ENCODE measurements at regions of chr5 and their contacts with region 1.

Region 1: DNA sequence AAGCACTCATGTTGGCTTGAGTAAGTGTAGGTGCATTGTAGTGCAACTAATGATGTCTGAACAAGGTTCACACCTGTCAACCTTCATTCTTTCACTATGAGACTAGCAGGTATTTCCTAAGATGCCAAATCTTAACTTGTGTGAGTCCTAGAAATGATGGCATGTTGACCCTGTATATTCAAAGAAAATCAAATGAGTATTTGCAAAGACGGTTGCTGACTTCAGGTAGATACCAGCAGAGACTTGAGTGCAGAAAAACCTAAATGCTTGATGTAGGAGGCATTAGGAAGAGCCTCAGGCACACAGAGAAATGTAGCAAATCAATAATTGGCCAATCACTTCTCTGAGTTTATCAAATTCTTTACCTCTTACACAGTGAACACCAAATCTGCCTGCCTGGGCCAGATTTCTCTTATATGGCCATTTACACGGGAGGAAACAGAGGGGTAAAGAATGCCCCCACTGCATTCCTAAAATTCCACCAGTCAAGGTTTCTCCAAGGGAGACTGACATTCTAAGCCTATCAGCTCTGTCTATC is 488.6 kb upstream of the WWC1 start:
- DNase-seq: peak; percentile 41
- H3K4me3 ChIP-seq: no peak overlapping the region
- H3K27ac ChIP-seq: no peak overlapping the region
- H3K4me1 ChIP-seq: peaks cover 16% of the 10 kb centered on the region
- H3K27me3 ChIP-seq: no peaks in the 10 kb centered on the region
- CTCF ChIP-seq: no peak

Region 2: GRCh38 chr5:167861129-167861927 is 58.5 kb after region 1 on chr5:
- CTCF ChIA-PET with region 1: no interaction called
- POLR2A ChIA-PET with region 1: no interaction called
- intact Hi-C with region 1: loop called (anchors 10 kb)
- DNase-seq: peak; percentile 42
- H3K4me3 ChIP-seq: no peak overlapping the region
- H3K27ac ChIP-seq: no peak overlapping the region
- H3K4me1 ChIP-seq: no peaks in the 10 kb centered on the region
- H3K27me3 ChIP-seq: no peaks in the 10 kb centered on the region
- CTCF ChIP-seq: no peak

Measured in A673 (cell line).